ENCODE measurements at regions of chr2 and their contacts with region 1.

Region 1: DNA sequence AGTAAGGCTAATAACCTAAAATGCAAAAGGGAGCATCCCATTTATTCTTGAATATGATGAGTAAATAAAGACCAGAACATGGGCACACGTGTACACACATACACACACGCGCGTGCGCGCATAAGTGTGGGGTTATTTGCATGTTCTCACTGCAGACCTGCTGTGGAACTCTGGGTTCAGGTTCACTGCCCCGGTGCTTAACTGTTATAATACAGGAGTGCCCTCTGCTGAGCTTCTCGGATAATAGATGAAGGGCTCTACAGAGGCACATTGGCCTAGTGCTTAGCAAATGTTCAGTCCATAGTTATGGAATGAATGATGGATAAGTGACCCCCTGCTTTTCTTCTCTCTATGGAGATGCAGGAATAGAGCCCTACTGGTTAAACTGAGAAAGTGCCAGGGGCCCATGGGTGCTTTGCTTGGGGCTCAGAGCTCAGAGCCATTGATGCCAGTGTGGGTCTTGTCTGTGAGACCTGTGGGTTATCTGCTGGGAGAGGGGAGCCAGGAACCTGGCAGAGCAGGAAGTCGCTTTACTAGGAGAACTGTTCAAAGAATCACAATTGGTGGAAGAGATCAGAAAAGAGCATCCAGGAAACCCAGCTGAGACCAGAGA is 3.6 kb upstream of the ARL4C start:
- DNase-seq: no peak
- H3K4me3 ChIP-seq: no peak overlapping the region
- H3K27ac ChIP-seq: no peak overlapping the region
- H3K4me1 ChIP-seq: peaks cover 8 to 24% (median 15%) of the 10 kb centered on the region in 4 donors
- H3K27me3 ChIP-seq: peaks cover 0 to under 1% (median under 1%) of the 10 kb centered on the region in 4 donors
- CTCF ChIP-seq: peak; percentile 30 to 44 (median 40)
- EP300 ChIP-seq: no peak
- POLR2A ChIP-seq: no peak

Region 2: GRCh38 chr2:234158812-234159211 is 341.7 kb before region 1 on chr2:
- intact Hi-C with region 1: no loop called
- DNase-seq: no peak
- H3K4me3 ChIP-seq: no peak overlapping the region
- H3K27ac ChIP-seq: no peak overlapping the region
- H3K4me1 ChIP-seq: no peaks in the 10 kb centered on the region
- H3K27me3 ChIP-seq: peaks cover 0 to 15% (median 0%) of the 10 kb centered on the region in 4 donors
- CTCF ChIP-seq: no peak
- EP300 ChIP-seq: no peak
- POLR2A ChIP-seq: no peak

Region 3: GRCh38 chr2:234288974-234289455 is 211.5 kb before region 1 on chr2:
- intact Hi-C with region 1: loop called (anchors 5 kb)
- DNase-seq: no peak
- H3K4me3 ChIP-seq: no peak overlapping the region
- H3K27ac ChIP-seq: no peak overlapping the region
- H3K4me1 ChIP-seq: peaks cover 0 to 8% (median 0%) of the 10 kb centered on the region in 4 donors
- H3K27me3 ChIP-seq: no peaks in the 10 kb centered on the region
- CTCF ChIP-seq: peak; percentile 59 to 71 (median 62)
- EP300 ChIP-seq: no peak
- POLR2A ChIP-seq: no peak

Region 4: DNA sequence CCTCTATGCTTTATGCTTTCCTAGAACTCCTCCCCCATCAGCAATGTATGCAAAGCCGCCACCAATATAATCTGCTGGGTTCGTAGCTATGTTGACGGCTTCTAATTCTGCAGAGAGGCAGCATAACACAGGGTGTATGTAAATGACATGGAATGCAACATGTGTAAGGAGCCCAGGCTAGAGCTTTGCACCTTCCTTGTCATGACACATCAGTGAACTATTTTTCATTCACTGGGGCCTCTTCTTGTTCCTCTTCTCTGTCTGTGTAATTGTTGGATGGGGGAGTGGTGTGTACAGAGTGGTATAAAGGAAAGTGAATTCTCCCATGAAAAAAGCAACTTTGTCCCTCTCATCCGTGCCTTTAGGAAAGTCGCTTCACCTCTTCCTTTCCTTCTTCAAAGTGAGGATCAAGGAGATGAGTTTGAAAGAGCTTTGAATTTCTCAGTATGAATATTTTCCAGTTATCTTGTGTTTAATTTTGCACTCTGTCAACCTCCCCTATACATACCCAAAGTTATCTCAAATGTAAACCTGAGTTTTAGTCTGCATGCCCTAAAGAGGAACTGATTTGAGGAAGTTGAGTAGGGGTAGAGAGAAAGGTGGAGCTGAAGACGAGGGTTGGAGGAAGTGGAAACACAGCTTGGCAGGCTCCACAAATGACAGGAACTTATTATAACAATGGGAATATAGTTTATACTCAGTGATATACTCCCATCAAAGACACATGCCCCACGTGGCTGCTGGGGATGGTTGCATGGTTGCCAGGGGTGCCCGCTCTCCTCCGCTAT is 71.3 kb after region 1 on chr2:
- intact Hi-C with region 1: no loop called
- DNase-seq: no peak
- H3K4me3 ChIP-seq: no peak overlapping the region
- H3K27ac ChIP-seq: no peak overlapping the region
- H3K4me1 ChIP-seq: no peaks in the 10 kb centered on the region
- H3K27me3 ChIP-seq: peaks cover 0 to 9% (median 0%) of the 10 kb centered on the region in 4 donors
- CTCF ChIP-seq: no peak
- EP300 ChIP-seq: no peak
- POLR2A ChIP-seq: no peak

Region 5: DNA sequence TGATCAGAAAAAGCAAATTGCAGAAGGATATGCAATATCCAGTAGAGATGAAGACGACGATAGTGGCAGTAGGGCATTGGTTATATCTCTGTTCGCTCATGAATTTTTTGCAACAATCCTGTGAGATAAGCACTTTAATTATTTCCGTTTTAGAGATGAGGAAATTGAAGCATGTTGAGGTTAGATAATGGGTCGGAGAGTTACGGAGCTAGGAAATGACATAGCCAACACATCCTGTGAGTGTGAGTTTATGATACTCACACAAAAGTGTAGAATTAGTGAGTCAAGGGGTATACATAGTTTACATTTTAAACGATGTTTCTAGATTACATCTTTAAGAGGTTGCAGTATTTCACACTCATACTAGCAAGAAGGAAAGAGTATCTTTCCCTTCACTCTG is 119.5 kb after region 1 on chr2:
- intact Hi-C with region 1: no loop called
- DNase-seq: no peak
- H3K4me3 ChIP-seq: no peak overlapping the region
- H3K27ac ChIP-seq: no peak overlapping the region
- H3K4me1 ChIP-seq: peaks cover 0 to 4% (median 0%) of the 10 kb centered on the region in 4 donors
- H3K27me3 ChIP-seq: no peaks in the 10 kb centered on the region
- CTCF ChIP-seq: no peak
- EP300 ChIP-seq: no peak
- POLR2A ChIP-seq: no peak

Measured in esophagus muscularis mucosa (tissue), 4 donors.